ENCODE measurements at regions of chr14 and their contacts with region 1.

Region 1: GRCh38 chr14:89618811-89619551 is 201.9 kb upstream of the FOXN3 start:
- DNase-seq: peak; percentile 90
- ATAC-seq: peak; percentile 95

Region 2: DNA sequence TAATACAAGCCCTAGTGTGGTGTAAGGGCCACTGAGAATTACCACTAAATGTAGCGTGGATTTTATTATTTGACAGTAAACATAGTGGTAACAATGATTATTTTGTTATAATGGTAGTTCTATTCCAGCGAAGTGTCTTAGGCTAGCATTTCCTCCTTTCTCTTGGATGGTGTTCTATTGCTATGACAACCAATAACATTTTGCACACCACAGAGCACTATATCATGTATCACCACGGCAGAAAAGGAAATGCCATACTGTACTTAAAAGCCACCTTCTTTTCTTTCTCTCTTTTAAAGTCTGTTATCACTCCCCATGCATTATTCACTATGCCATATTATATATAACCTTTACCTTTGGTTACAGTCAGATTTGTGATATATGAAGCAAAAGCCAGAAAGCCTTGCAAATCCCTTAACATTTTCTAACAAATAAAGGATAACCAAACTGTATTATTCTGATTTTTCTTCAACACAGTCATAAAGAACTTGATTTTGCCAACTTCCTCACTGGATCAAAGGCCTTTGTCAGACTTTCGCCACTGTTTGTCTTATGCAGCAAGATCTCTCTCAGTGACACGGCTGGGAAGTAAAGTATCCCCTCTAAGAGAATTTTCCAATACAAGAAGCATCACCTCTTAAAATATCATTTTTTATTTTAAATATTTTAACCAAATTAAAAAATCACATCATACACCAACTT is 397.7 kb before region 1 on chr14:
- intact Hi-C with region 1: loop called (anchors 10 kb)
- DNase-seq: no peak
- ATAC-seq: peak; percentile 88

Region 3: GRCh38 chr14:89572596-89573398 is 46.2 kb before region 1 on chr14:
- intact Hi-C with region 1: loop called (anchors 5 kb)
- DNase-seq: no peak
- ATAC-seq: peak; percentile 47

Region 4: DNA sequence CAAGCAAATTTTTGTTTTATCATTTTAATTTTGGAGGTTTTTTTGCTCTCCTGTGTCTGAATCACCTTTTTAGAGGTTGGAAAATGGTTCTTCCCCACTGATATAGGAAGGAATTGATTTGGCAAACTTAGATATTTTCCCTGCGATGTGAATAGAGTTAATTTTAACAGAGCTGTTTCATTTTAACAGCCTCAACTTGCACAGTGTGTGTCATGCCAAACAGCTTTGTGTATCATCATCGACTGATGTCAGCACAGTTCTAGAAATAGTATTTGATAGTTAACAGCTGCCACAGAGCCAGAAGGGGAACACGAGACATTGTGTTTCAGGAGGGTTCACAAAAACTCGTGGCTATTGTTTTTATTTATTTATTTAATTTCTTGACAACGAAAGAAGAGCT is 41.2 kb after region 1 on chr14:
- intact Hi-C with region 1: loop called (anchors 2 kb)
- DNase-seq: no peak
- ATAC-seq: peak; percentile 95

Region 5: DNA sequence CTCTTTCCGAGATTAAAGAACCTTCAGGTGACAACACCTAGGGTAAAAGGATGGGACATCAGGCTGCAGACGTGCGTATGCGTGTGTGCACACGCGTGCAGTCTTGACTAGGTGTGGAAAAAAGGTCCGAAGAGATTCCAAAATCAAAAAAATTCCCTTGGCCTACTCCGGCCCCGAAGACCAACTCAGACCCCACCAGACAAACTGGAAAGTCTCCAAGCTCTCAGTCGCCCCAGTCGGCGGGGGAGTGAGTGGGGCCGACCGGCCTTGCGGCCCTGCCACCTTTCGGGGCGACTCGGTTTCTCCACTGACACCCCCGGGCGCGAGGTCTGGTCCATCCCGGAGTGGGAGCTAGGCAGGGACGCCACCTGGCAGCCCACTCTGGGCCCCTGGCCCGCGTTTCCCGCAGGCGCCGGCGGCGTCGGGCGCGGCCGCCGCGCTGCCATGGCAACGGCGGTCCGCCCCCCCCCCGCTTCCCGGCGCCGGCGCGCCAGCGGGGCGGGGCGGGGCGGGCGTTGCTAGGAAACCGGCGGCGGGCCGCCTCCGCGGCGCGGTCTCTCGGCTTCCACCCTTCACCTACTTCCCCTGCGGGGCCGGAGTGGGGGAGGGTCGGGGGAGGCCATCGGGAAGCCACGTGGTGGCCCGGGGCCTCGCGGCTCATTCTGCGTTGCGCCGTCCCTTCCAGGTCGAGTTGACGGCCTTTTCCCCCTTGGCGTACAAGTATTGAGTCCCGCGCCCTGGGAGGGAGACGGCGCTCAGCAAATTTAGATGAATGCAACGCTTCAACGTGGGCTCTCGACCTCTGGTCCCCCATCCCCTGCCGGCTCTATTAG is 82.4 kb after region 1 on chr14:
- intact Hi-C with region 1: loop called (anchors 5 kb)
- DNase-seq: peak; percentile 96
- ATAC-seq: peak; percentile 94

Region 6: GRCh38 chr14:89767861-89768268 is 148.9 kb after region 1 on chr14:
- intact Hi-C with region 1: loop called (anchors 10 kb)
- DNase-seq: no peak
- ATAC-seq: peak; percentile 26

Measured in Right ventricle myocardium inferior (tissue), 1 donor.